GM12878 (cell line): ENCODE measurements at regions of chr7 and their contacts with region 1.

Region 1: GRCh38 chr7:100889761-100890634 is 483 bp upstream of the UFSP1 start:
- DNase-seq: peak; percentile 73
- ATAC-seq: peak; percentile 89
- H3K4me3 ChIP-seq: peak overlapping the region; percentile 91
- H3K27ac ChIP-seq: peak overlapping the region; percentile 24
- H3K4me1 ChIP-seq: peaks cover 30% of the 10 kb centered on the region
- H3K27me3 ChIP-seq: no peaks in the 10 kb centered on the region
- CTCF ChIP-seq: no peak
- EP300 ChIP-seq: no peak
- POLR2A ChIP-seq: peak; percentile 36; the same call in 1 of the 2 replicates
- RAD21 ChIP-seq: no peak

Region 2: DNA sequence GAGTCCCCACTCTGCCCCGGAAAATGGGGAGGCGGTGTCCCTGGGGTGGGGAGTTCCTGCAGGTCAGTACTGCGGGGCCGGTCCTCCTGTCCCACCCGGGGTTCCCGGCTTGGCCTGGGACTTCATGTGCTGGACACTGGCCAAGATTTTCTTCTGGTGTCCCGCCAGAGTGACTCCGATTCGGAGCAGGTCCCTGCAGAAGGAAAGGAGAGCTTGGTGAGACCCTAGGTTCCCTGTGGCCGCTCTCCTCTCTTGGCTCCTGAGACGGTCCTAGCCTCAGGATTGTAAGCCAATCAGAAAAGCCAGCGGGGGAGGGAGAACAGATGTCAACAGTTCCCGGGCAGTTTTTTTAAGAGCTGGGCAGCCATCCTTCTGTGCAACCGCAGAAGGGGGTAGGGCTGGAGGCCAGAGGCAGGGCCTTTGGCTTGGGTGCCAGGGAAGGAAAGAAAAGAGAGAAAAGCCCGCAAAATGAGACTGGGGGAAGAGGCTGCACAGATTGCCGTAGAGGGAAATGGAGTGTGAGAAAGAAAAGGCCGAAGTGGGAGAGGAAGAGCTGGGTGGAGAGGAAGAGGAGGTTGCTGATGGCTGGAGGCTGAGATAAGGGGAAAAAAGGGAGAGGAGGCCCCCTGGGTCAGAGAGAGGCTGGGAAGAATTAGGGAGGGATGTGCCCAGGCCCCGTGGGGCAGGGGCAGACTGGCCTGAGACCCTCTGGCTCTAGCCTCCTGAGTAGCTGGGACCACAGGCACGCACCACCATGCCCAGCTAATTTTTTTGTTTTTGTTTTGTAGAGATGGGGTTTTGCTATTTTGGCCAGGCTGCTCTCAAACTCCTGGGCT is 86.4 kb before region 1 on chr7:
- CTCF ChIA-PET with region 1: interaction called, 5 read pairs
- POLR2A ChIA-PET with region 1: interaction called, 11 read pairs
- RAD21 ChIA-PET with region 1: interaction called, 3 read pairs
- SMC1A ChIA-PET with region 1: interaction called, 7 read pairs
- in situ Hi-C with region 1: no loop called
- intact Hi-C with region 1: no loop called
- DNase-seq: peak; percentile 56
- ATAC-seq: peak; percentile 98
- H3K4me3 ChIP-seq: peak overlapping the region; percentile 53
- H3K27ac ChIP-seq: peak overlapping the region; percentile 80
- H3K4me1 ChIP-seq: peaks cover 15% of the 10 kb centered on the region
- H3K27me3 ChIP-seq: no peaks in the 10 kb centered on the region
- CTCF ChIP-seq: no peak
- EP300 ChIP-seq: no peak
- POLR2A ChIP-seq: peak; percentile 47; the same call in 1 of the 2 replicates
- RAD21 ChIP-seq: no peak

Region 3: GRCh38 chr7:100874577-100875355 is 15.2 kb before region 1 on chr7 and contains the start of gene SRRT:
- CTCF ChIA-PET with region 1: interaction called, 7 read pairs
- POLR2A ChIA-PET with region 1: interaction called, 131 read pairs
- RAD21 ChIA-PET with region 1: interaction called, 21 read pairs
- SMC1A ChIA-PET with region 1: interaction called, 33 read pairs
- in situ Hi-C with region 1: no loop called
- intact Hi-C with region 1: loop called (anchors 1 kb)
- DNase-seq: peak; percentile 93
- ATAC-seq: peak; percentile 96
- H3K4me3 ChIP-seq: peak within 1 kb of the TSS; percentile 99
- H3K27ac ChIP-seq: peak within 1 kb of the TSS; percentile 98
- H3K4me1 ChIP-seq: peaks cover 6% of the 10 kb centered on the region; the same call in 1 of the 2 replicates
- H3K27me3 ChIP-seq: no peaks in the 10 kb centered on the region
- CTCF ChIP-seq: peak in 1 of 3 experiments; percentile 16; a peak in 1 of 6 replicates
- EP300 ChIP-seq: peak in 1 of 2 experiments; percentile 28; a peak in 1 of 4 replicates
- POLR2A ChIP-seq: peak; percentile 96
- RAD21 ChIP-seq: no peak
- polyA plus RNA-seq, gene SRRT: 11.1 to 33.6 TPM

Region 4: DNA sequence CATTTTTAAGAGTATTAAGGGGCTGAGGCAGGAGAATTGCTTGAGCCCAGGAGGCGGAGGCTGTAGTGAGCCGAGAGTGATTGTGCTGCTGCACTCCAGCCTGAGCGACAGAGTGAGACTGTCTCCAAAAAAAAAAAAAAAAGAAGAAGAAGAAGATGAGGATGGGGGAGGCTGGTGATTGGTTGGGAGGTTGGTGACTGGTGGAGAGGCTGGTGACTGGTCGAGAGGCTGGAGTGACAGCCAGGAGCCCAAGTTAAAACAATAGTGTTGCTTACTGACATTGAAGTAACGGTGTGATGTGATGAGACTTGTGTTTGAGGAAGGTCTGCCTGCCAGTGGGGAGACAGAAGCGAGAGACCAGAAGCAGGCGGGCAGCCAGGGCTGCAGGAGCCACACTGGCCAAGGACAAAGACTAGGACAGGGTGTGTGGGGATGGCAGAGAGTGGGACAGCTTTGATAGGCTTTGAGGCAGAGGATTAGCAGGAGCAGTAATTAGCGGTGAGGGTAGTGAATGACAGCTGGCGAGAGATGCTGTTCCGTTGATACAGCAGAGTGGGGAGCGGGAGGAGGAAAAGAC is 10.2 kb before region 1 on chr7:
- CTCF ChIA-PET with region 1: interaction called, 7 read pairs
- POLR2A ChIA-PET with region 1: interaction called, 131 read pairs
- RAD21 ChIA-PET with region 1: interaction called, 21 read pairs
- SMC1A ChIA-PET with region 1: interaction called, 33 read pairs
- in situ Hi-C with region 1: no loop called
- intact Hi-C with region 1: loop called (anchors 1 kb)
- DNase-seq: no peak
- ATAC-seq: no peak
- H3K4me3 ChIP-seq: no peak overlapping the region
- H3K27ac ChIP-seq: no peak overlapping the region
- H3K4me1 ChIP-seq: peaks cover 6% of the 10 kb centered on the region; the same call in 1 of the 2 replicates
- H3K27me3 ChIP-seq: no peaks in the 10 kb centered on the region
- CTCF ChIP-seq: no peak
- EP300 ChIP-seq: no peak
- POLR2A ChIP-seq: no peak
- RAD21 ChIP-seq: no peak

Region 5: GRCh38 chr7:100965723-100966541 is 75.9 kb after region 1 on chr7:
- CTCF ChIA-PET with region 1: no interaction called
- POLR2A ChIA-PET with region 1: no interaction called
- RAD21 ChIA-PET with region 1: no interaction called
- SMC1A ChIA-PET with region 1: no interaction called
- in situ Hi-C with region 1: no loop called
- intact Hi-C with region 1: loop called (anchors 5 kb)
- DNase-seq: no peak
- ATAC-seq: peak; percentile 93
- H3K4me3 ChIP-seq: peak overlapping the region; percentile 30; the same call in 1 of the 2 replicates
- H3K27ac ChIP-seq: no peak overlapping the region
- H3K4me1 ChIP-seq: no peaks in the 10 kb centered on the region
- H3K27me3 ChIP-seq: peaks cover 3 to 15% of the 10 kb centered on the region in 2 experiments; a peak in 3 of 4 replicates
- CTCF ChIP-seq: peak; percentile 64 to 81 (median 80)
- EP300 ChIP-seq: no peak
- POLR2A ChIP-seq: no peak
- RAD21 ChIP-seq: peak; percentile 63

Region 6: GRCh38 chr7:101058355-101058754 is 168.4 kb after region 1 on chr7:
- CTCF ChIA-PET with region 1: interaction called, 17 read pairs
- POLR2A ChIA-PET with region 1: no interaction called
- RAD21 ChIA-PET with region 1: interaction called, 3 read pairs
- SMC1A ChIA-PET with region 1: interaction called, 5 read pairs
- in situ Hi-C with region 1: loop called (anchors 5 kb)
- intact Hi-C with region 1: no loop called
- DNase-seq: no peak
- ATAC-seq: peak; percentile 77
- H3K4me3 ChIP-seq: no peak overlapping the region
- H3K27ac ChIP-seq: no peak overlapping the region
- H3K4me1 ChIP-seq: no peaks in the 10 kb centered on the region
- H3K27me3 ChIP-seq: no peaks in the 10 kb centered on the region
- CTCF ChIP-seq: no peak
- EP300 ChIP-seq: no peak
- POLR2A ChIP-seq: no peak
- RAD21 ChIP-seq: no peak

Region 7: DNA sequence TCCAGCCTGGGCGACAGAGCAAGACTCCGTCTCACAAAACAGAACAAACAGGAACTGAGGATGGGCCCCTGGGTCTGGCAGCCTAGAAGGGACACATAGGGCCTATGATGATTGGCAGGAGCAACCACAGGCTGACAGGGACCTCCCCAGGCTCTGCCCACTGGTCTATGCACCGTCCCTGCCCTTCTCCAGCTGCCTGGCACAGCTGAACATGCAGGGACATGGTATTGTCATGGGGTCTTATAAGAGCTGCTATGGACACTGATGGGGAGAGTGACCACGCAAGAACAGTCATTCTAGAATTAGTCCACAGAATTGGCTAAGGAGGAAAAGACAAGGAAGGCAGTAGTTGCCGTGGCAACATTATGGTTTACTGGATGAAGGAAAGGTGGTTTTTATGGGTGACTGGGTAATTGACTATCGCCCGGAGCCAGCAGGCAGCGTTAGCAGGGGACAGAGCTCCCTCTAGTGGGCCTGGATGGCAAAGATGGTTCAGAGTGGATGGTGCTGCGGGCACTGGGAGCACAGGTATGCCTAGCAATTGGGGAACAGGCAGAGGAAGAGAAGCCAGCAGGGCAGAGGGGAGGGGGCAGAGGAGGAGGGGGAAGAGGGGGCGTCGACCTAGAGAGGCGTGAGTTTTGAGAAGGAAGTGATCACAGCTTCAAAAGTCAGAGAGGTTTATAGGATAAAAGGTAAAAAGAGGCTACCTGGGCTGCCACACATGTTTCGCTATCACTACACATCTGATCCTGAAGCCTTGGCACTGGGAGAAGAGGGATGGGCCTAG is 187.5 kb after region 1 on chr7:
- CTCF ChIA-PET with region 1: interaction called, 8 read pairs
- POLR2A ChIA-PET with region 1: no interaction called
- RAD21 ChIA-PET with region 1: interaction called, 3 read pairs
- SMC1A ChIA-PET with region 1: interaction called, 3 read pairs
- in situ Hi-C with region 1: no loop called
- intact Hi-C with region 1: loop called (anchors 1 kb)
- DNase-seq: peak; percentile 49
- ATAC-seq: peak; percentile 99
- H3K4me3 ChIP-seq: no peak overlapping the region
- H3K27ac ChIP-seq: no peak overlapping the region
- H3K4me1 ChIP-seq: peaks cover 5% of the 10 kb centered on the region
- H3K27me3 ChIP-seq: no peaks in the 10 kb centered on the region
- CTCF ChIP-seq: peak; percentile 92 to 96 (median 96); a peak in 5 of 6 replicates
- EP300 ChIP-seq: 0 out of 4 replicates have a peak, but pooled peaks of 1 of the 2 experiments have one; percentile 12
- POLR2A ChIP-seq: no peak
- RAD21 ChIP-seq: peak; percentile 82